WTC11 (cell line): ENCODE measurements at regions of chr5 and their contacts with region 1.

Region 1: DNA sequence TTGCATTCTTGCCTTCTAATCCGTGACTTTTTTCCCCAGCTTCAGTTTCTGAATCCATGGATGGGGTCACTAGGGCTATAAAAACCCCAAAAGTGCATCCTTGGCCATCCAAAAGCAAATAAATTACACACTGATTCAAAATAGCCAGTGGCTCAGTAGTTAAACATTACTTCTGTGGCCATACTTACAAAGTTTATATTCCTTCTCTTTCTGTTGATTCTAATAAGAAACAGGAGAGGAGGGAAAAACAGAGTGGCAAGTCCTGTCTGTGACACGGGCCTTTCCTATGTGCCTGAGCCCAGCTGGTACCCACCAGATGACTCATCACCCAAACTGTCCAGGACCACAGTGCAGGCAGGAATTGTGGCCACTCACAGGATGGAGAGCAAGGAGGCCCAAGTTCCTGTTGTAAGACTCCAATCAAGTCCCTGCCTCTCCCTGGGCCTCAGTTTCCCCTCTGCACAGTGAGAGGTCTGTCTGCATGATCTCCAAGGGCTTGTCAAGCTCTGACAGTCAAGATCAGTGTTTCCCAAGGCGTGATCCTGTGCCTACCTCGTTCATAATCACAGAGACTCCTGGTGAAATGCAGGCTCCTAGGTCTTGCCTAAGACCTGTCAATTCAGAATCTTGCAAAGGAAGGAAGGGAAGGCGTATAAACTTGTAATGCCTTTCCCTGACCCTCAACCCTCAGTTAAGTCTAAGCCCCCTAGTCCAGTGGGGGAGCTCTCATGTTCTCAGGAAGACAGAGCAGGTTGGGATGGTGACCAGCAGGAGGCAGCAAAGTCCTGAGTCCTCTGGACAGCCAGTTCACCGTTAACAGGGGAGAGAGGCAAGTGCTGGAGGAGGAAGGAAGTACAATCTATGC is 29.5 kb downstream of the TNIP1 start:
- DNase-seq: peak; percentile 89
- ATAC-seq: peak; percentile 88
- H3K4me3 Mint-ChIP-seq: no peak overlapping the region
- H3K27ac Mint-ChIP-seq: no peak overlapping the region
- H3K4me1 Mint-ChIP-seq: no peaks in the 10 kb centered on the region
- H3K27me3 Mint-ChIP-seq: no peaks in the 10 kb centered on the region
- CTCF ChIP-seq: peak; percentile 71

Region 2: DNA sequence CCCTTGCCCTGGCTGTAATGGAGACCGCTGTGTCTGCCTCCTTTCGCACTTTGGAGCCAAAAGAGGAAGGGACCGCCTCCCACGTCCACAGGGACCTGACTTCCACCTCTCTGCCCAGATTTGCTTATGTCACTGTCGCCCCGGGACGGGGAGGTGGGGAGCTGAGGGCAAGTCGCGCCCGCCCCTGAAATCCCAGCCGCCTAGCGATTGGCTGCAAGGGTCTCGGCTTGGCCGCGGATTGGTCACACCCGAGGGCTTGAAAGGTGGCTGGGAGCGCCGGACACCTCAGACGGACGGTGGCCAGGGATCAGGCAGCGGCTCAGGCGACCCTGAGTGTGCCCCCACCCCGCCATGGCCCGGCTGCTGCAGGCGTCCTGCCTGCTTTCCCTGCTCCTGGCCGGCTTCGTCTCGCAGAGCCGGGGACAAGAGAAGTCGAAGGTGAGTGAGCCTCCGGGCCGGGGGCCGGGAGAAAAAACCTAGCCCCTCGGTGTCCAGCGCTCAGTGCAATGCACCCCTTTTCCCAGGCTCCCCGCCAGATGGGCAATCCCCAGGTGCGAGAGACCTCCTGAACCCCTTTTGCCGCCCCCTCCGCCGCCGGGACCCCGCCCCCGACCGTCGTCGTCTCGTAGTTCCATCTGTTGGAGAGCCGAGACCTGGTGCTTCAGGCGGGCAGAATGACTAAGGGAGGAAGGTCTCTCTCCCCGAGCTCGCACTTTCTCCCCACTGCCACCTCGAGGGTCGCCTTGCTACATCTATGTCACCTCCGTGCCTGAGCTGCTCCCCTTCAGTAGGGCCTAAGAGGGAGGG is 30.8 kb before region 1 on chr5 and contains the start of gene GPX3:
- CTCF ChIA-PET with region 1: interaction called, 21 read pairs
- POLR2A ChIA-PET with region 1: no interaction called
- DNase-seq: peak; percentile 89
- ATAC-seq: peak; percentile 99
- H3K4me3 Mint-ChIP-seq: peak within 1 kb of the TSS; percentile 77
- H3K27ac Mint-ChIP-seq: no peak within 1 kb of the TSS
- H3K4me1 Mint-ChIP-seq: peaks cover 4% of the 10 kb centered on the region
- H3K27me3 Mint-ChIP-seq: peaks cover 52% of the 10 kb centered on the region
- CTCF ChIP-seq: no peak
- total RNA-seq, gene GPX3: 24.5 to 26.9 TPM (median 26.2 TPM) in 3 replicates

Region 3: GRCh38 chr5:151063142-151063949 is 12.0 kb after region 1 on chr5:
- CTCF ChIA-PET with region 1: interaction called, 37 read pairs
- POLR2A ChIA-PET with region 1: no interaction called
- DNase-seq: no peak
- ATAC-seq: no peak
- H3K4me3 Mint-ChIP-seq: no peak overlapping the region
- H3K27ac Mint-ChIP-seq: no peak overlapping the region
- H3K4me1 Mint-ChIP-seq: peaks cover 17% of the 10 kb centered on the region
- H3K27me3 Mint-ChIP-seq: no peaks in the 10 kb centered on the region
- CTCF ChIP-seq: no peak

Region 4: GRCh38 chr5:151080623-151081430 is 29.5 kb after region 1 on chr5 and contains the start of gene TNIP1:
- CTCF ChIA-PET with region 1: interaction called, 40 read pairs
- POLR2A ChIA-PET with region 1: no interaction called
- DNase-seq: peak; percentile 82
- ATAC-seq: peak; percentile 76
- H3K4me3 Mint-ChIP-seq: peak within 1 kb of the TSS; percentile 83
- H3K27ac Mint-ChIP-seq: peak within 1 kb of the TSS; percentile 84; the same call in 1 of the 2 replicates
- H3K4me1 Mint-ChIP-seq: peaks cover 32% of the 10 kb centered on the region
- H3K27me3 Mint-ChIP-seq: no peaks in the 10 kb centered on the region
- CTCF ChIP-seq: no peak
- total RNA-seq, gene TNIP1: 41.1 to 48.9 TPM (median 47.0 TPM) in 3 replicates

Region 5: GRCh38 chr5:151126199-151126645 is 74.9 kb after region 1 on chr5:
- CTCF ChIA-PET with region 1: interaction called, 50 read pairs
- POLR2A ChIA-PET with region 1: no interaction called
- DNase-seq: peak; percentile 77
- ATAC-seq: peak; percentile 80
- H3K4me3 Mint-ChIP-seq: no peak overlapping the region
- H3K27ac Mint-ChIP-seq: no peak overlapping the region
- H3K4me1 Mint-ChIP-seq: peaks cover 1% of the 10 kb centered on the region; the same call in 1 of the 2 replicates
- H3K27me3 Mint-ChIP-seq: no peaks in the 10 kb centered on the region
- CTCF ChIP-seq: peak; percentile 86

Region 6: GRCh38 chr5:151164686-151165392 is 113.5 kb after region 1 on chr5:
- CTCF ChIA-PET with region 1: interaction called, 56 read pairs
- POLR2A ChIA-PET with region 1: no interaction called
- DNase-seq: peak; percentile 81
- ATAC-seq: peak; percentile 96
- H3K4me3 Mint-ChIP-seq: no peak overlapping the region
- H3K27ac Mint-ChIP-seq: no peak overlapping the region
- H3K4me1 Mint-ChIP-seq: peaks cover 6% of the 10 kb centered on the region
- H3K27me3 Mint-ChIP-seq: 0 out of 2 replicates have a peak, but pooled peaks cover 4% of the 10 kb centered on the region
- CTCF ChIP-seq: peak; percentile 69